ENCODE measurements at regions of chr16 and their contacts with region 1.

Region 1: DNA sequence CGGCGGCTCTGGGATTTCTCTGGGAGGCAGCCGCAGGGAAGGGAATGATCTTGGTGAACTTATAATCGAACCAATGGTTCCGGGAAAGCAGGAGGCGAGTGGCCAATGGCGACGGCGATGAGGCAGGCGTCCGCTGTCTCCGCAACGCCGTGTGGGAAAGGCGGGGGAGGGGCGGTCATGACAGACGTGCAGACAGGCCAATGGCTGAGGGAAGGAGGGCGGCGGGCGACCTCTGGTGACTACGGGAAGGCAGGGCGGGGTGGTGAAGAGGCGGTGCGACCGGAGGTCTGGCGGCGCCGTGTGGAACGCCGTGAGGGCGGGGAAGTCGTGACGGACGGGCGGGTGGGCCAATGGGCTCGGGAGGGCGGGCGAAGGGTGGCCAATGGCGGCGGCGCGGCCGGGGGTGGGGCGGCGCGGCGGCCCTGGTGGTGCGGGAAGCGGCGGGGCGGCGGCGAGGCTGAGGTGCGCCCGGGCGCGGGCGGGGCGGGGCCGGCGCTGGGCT is at the start of gene RAB40C:
- DNase-seq: peak; percentile 99
- H3K4me3 ChIP-seq: peak within 1 kb of the TSS; percentile 92
- H3K27ac ChIP-seq: peak within 1 kb of the TSS; percentile 89 to 97
- H3K4me1 ChIP-seq: peaks cover 13% of the 10 kb centered on the region
- H3K27me3 ChIP-seq: no peaks in the 10 kb centered on the region
- CTCF ChIP-seq: peak in 2 of 3 donors; percentile 19 to 54
- EP300 ChIP-seq: peak; percentile 76
- POLR2A ChIP-seq: peak; percentile 42
- total RNA-seq, gene RAB40C: 11.7 to 24.1 (median 21.4) TPM

Region 2: DNA sequence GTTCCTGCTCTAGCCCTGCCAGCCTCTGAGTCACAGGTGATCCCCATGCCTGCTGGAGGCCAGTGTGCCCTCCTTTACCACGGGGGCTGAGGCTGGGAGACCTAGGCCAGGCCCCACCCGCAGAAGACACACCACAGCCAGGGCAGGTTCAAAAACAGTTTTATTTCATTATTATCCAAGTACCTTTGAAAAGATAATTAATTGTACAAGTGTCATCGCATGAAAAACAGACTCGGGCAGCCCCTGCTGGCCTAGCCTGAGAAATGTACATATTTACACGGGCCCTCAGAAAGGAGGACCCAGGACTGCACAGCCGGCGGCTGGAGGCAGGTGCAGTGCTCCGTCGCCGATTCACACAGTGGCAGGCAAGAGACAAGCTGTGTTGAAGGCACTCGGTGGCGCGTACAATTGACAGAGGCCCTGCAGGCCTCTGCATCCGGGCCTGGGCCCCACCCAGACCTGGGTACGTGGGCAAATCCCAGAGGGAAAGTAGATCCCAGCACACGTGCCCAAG is 302.4 kb before region 1 on chr16:
- intact Hi-C with region 1: no loop called
- DNase-seq: no peak
- H3K4me3 ChIP-seq: no peak overlapping the region
- H3K27ac ChIP-seq: no peak overlapping the region
- H3K4me1 ChIP-seq: no peaks in the 10 kb centered on the region
- H3K27me3 ChIP-seq: no peaks in the 10 kb centered on the region
- CTCF ChIP-seq: no peak
- EP300 ChIP-seq: no peak
- POLR2A ChIP-seq: no peak

Region 3: GRCh38 chr16:626787-627186 is 37.1 kb after region 1 on chr16:
- intact Hi-C with region 1: loop called in 1 of 4 experiments (anchors 5 kb)
- DNase-seq: peak; percentile 71 to 89 (median 77)
- H3K4me3 ChIP-seq: no peak overlapping the region
- H3K27ac ChIP-seq: peak overlapping the region in 1 of 2 donors; percentile 24
- H3K4me1 ChIP-seq: peaks cover 17% of the 10 kb centered on the region
- H3K27me3 ChIP-seq: no peaks in the 10 kb centered on the region
- CTCF ChIP-seq: no peak
- EP300 ChIP-seq: no peak
- POLR2A ChIP-seq: no peak

Region 4: DNA sequence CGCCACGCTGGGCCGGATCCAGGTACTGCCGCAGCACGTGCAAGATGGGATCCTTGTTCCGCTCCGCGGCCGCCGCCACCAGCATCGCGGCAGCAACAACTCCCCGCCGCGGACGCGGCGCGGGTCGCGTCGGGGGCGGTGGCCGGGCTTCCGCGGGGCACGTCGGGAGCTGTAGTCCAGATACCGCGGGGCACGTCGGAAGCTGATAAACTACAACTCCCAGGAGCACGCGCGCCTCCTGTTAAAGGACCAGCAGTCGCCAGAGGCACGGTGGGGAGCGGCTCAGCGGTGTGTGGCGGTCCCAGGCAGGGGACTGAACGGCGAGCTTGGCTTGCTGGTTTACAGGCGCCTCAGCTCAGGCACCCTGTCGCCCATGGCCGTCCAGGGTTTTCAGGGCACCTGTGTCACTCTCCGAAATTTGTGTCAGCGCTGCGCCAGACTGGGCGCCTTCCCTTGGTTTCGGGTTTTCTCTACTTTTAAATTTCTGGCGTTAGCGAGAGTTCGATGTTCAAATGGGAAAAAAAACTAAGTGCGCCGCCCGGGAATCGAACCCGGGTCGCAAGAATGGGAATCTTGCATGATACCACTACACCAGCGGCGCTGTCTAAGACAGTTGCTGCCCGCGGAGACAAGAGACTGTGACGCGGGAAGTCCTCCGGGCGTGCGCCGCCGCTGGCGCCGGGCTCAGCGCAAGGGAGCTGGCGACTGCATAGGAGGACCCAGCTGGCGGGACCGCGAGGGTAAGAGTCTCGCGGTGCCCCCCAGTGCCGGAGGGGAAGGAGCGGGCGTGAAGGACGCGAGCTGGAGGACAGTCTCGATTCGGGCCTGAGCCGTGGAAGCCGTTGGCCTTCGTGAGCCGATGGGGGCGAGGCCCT is 46.7 kb after region 1 on chr16 and contains the start of gene METTL26:
- intact Hi-C with region 1: loop called in 2 of 4 experiments (anchors 5 kb)
- DNase-seq: peak; percentile 95 to 96 (median 95)
- H3K4me3 ChIP-seq: peak within 1 kb of the TSS; percentile 88
- H3K27ac ChIP-seq: peak within 1 kb of the TSS; percentile 84 to 96
- H3K4me1 ChIP-seq: peaks cover 10% of the 10 kb centered on the region
- H3K27me3 ChIP-seq: no peaks in the 10 kb centered on the region
- CTCF ChIP-seq: peak in 1 of 3 donors; percentile 29
- EP300 ChIP-seq: no peak
- POLR2A ChIP-seq: peak; percentile 66
- total RNA-seq, gene METTL26: 61.8 to 139 (median 75.9) TPM

Region 5: GRCh38 chr16:660459-661183 is 70.9 kb after region 1 on chr16:
- intact Hi-C with region 1: loop called in 2 of 4 experiments (anchors 5 kb)
- DNase-seq: peak; percentile 88 to 95 (median 91)
- H3K4me3 ChIP-seq: no peak overlapping the region
- H3K27ac ChIP-seq: peak overlapping the region; percentile 66 to 74
- H3K4me1 ChIP-seq: peaks cover 5% of the 10 kb centered on the region
- H3K27me3 ChIP-seq: no peaks in the 10 kb centered on the region
- CTCF ChIP-seq: peak; percentile 35 to 75 (median 73)
- EP300 ChIP-seq: no peak
- POLR2A ChIP-seq: no peak

Region 6: DNA sequence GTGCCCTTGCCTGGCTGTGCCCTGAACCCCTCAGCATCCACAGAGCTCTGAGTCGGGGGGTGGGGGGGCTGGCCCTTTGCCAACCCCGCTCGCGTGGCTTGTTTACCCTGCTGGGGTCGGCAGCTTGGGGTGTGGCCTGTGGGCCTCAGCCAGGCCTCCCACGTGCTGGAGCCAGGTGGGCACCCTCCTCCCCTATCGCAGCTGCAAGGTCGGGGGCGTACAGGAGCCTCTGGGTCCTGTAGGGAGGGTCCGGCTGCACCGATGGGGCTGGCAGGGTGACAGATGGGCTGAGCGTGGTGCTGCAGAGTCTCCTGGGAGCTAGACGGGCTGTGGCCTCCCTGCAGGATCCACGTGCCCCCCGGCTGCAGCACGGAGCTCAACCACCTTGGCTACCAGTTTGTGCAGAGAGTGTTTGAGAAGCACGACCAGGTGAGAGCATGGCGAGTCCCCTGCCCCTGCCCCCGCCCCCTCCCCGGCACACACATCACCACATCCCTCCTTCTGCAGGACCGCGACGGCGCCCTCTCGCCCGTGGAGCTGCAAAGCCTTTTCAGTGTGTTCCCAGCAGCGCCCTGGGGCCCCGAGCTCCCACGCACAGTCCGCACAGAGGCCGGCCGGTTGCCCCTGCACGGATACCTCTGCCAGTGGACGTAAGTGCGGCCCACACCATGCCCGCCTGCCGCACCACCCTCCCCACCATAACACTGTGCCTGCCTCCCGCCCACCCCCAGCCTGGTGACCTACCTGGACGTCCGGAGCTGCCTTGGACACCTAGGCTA is 81.8 kb after region 1 on chr16:
- intact Hi-C with region 1: no loop called
- DNase-seq: no peak
- H3K4me3 ChIP-seq: no peak overlapping the region
- H3K27ac ChIP-seq: no peak overlapping the region
- H3K4me1 ChIP-seq: peaks cover 15% of the 10 kb centered on the region
- H3K27me3 ChIP-seq: no peaks in the 10 kb centered on the region
- CTCF ChIP-seq: no peak
- EP300 ChIP-seq: no peak
- POLR2A ChIP-seq: no peak

Region 7: DNA sequence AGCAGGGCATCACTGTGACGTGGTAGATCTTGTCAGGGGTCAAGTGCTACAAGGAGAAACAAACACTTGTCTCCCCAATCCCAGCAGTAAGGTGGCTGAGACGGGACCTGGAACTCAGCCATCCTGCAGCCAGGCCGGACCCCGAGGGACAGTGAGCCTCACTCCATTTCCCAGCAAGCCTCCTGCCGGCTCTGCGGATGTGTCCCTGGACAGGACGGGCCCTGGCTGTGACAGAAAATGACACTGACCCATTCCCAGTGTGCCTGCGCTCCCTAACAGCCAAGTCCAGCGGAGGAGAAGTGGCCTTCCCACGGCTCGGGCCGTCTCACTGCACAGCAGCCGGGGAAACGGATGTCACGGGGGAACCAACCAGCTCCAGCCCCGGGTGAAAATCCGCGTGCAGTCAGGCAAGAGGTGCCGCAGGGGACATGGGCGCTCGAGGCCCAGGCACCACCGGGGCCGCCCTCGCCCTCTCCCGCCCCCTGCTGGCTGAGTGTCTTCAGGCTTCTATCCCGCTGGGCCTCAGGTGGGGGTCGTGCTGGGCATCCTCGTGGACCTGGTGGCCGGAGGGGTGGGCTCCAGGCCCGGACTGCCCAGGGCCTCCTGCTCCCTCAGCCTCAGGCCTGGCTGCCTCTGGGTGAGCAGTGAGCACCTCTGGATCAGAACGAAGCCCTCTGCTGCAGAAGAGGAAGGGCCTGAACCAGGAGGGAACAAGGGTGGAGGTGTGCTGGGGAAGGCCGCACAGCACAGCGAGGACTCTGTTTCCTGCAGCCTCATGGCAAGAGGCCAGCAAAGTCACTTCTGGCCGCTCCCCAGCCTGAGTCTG is 143.9 kb after region 1 on chr16:
- intact Hi-C with region 1: no loop called
- DNase-seq: peak in 1 of 5 donors; percentile 36
- H3K4me3 ChIP-seq: no peak overlapping the region
- H3K27ac ChIP-seq: no peak overlapping the region
- H3K4me1 ChIP-seq: no peaks in the 10 kb centered on the region
- H3K27me3 ChIP-seq: no peaks in the 10 kb centered on the region
- CTCF ChIP-seq: no peak
- EP300 ChIP-seq: no peak
- POLR2A ChIP-seq: no peak

Measured in ovary (tissue), 10 donors.